ENCODE measurements at regions of chr5 and their contacts with region 1.

Region 1: DNA sequence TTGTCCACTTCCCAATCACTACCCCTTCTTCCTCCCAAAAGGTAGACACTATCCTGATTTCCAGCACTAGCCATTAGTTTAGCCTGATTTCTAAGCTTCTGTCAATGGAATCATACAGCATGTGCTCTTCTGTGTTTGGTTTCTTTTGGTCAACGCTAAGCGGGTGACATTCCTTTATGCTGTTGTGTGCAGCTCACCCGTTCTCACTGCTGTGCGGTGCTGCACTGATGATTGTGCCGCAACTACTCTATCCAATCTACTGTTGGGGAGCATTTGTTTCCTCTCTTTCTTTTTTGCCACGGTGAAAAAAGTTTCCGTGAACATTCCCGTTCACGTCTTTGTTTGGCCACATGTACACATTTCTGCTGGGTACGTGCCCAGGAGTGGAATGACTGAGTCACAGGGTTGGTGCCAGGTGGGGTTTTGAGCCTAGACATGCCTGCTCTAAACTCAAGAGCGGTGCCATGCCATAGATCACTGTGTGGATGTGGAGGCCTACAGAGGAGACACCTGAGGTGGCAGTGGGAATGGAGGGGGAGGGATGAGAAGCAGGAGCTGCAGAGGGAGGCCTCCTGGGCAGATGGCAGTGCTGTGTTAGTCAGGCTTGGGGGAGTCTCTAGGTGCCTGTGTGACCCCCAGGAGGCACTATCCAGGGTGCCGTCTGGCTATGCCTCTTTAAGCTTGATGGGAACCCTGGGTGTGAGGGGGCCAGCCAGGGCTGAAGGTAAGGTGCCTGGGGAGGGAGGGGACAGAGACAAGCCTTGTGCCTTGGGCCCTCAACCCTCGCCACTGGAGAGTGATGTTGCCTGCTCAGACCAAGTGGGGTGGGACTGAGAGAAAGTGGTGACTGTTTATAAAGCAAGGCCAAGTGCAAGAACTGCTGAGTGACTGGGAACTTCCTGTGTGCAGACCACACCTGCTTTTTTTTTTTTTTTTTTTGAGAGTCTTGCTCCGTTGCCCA is 11.4 kb upstream of the ANKRD33B start:
- DNase-seq: no peak
- ATAC-seq: no peak
- H3K4me3 ChIP-seq: no peak overlapping the region
- H3K27ac ChIP-seq: peak overlapping the region in 1 of 12 donors; percentile 61
- H3K4me1 ChIP-seq: peaks cover 0 to 27% (median 6%) of the 10 kb centered on the region in 12 donors
- H3K27me3 ChIP-seq: no peaks in the 10 kb centered on the region
- CTCF ChIP-seq: no peak
- POLR2A ChIP-seq: no peak

Region 2: DNA sequence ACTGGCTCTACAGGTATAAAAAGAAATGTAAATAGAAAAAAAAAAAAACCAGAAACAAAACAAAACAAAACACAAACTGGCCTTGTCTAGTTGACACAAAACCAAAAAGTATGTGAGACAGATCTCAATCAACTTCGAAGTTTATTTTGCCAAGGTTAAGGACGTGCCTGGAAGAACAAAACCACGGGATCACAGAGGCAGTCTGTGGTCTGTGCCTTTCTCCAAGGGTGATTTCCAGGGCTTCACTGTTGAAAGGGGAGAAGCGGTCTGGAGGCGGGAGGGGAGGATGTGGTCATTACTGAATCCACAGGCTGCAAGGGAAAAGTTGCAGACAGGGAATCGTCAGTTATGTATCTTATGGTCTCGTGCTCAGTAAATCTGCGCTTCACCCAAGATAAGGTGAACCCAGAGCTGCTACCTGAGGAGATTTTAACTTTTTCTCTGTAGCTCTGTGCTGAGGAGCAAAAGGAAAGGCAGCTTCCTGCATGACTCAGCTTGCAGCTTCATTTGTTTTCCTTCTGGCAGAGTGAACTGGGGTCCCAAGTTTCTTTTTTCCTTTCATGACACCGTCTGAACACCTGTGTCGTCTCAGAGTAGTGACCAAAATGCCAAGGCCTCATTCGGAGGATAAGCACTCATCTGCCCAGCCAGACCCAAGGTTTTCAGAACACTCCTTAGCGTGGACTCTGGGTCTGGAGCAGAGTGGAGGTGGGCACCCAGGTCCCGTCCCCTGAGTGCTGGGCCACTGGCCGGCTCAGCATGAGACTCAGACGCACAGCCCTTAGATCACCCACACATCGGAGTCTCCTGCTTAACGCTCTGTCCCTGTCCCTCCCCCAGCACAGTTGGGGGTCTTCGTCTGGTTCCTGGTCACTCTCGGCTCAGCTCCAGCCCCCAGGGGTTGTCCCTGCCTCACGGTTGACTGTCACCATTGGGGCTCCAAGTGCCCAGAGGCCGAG is 84.9 kb before region 1 on chr5:
- intact Hi-C with region 1: loop called in 2 of 10 experiments (anchors 10 kb)
- DNase-seq: no peak
- ATAC-seq: peak in 1 of 4 donors; percentile 36
- H3K4me3 ChIP-seq: no peak overlapping the region
- H3K27ac ChIP-seq: no peak overlapping the region
- H3K4me1 ChIP-seq: peaks cover 0 to 14% (median 0%) of the 10 kb centered on the region in 12 donors
- H3K27me3 ChIP-seq: no peaks in the 10 kb centered on the region
- CTCF ChIP-seq: no peak
- POLR2A ChIP-seq: no peak

Region 3: GRCh38 chr5:10479226-10479721 is 73.2 kb before region 1 on chr5:
- intact Hi-C with region 1: loop called in 1 of 10 experiments (anchors 10 kb)
- DNase-seq: no peak
- ATAC-seq: peak in 1 of 4 donors; percentile 36
- H3K4me3 ChIP-seq: no peak overlapping the region
- H3K27ac ChIP-seq: no peak overlapping the region
- H3K4me1 ChIP-seq: peaks cover 0 to 18% (median under 1%) of the 10 kb centered on the region in 12 donors
- H3K27me3 ChIP-seq: no peaks in the 10 kb centered on the region
- CTCF ChIP-seq: no peak
- POLR2A ChIP-seq: no peak

Region 4: GRCh38 chr5:10489810-10490426 is 62.5 kb before region 1 on chr5:
- intact Hi-C with region 1: loop called in 2 of 10 experiments (anchors 5 kb)
- DNase-seq: no peak
- ATAC-seq: peak in 3 of 4 donors; percentile 26 to 66 (median 44)
- H3K4me3 ChIP-seq: no peak overlapping the region
- H3K27ac ChIP-seq: peak overlapping the region in 2 of 12 donors; percentile 8 to 40
- H3K4me1 ChIP-seq: peaks cover 0 to 43% (median 21%) of the 10 kb centered on the region in 12 donors
- H3K27me3 ChIP-seq: no peaks in the 10 kb centered on the region
- CTCF ChIP-seq: no peak
- POLR2A ChIP-seq: no peak

Region 5: GRCh38 chr5:10513501-10514442 is 38.7 kb before region 1 on chr5:
- intact Hi-C with region 1: loop called in 1 of 10 experiments (anchors 5 kb)
- DNase-seq: no peak
- ATAC-seq: no peak
- H3K4me3 ChIP-seq: no peak overlapping the region
- H3K27ac ChIP-seq: no peak overlapping the region
- H3K4me1 ChIP-seq: peaks cover 0 to 6% (median 0%) of the 10 kb centered on the region in 12 donors
- H3K27me3 ChIP-seq: no peaks in the 10 kb centered on the region
- CTCF ChIP-seq: no peak
- POLR2A ChIP-seq: no peak

Measured in heart left ventricle (tissue), 16 donors.